GM12878 (cell line): ENCODE measurements at regions of chr4 and their contacts with region 1.

Region 1: GRCh38 chr4:78638337-78639172 is 87.0 kb downstream of the ANXA3 start:
- DNase-seq: peak; percentile 86
- ATAC-seq: peak; percentile 78
- H3K4me3 ChIP-seq: no peak overlapping the region; the same call in 1 of the 2 replicates
- H3K27ac ChIP-seq: peak overlapping the region; percentile 62
- H3K4me1 ChIP-seq: peaks cover 57% of the 10 kb centered on the region
- H3K27me3 ChIP-seq: no peaks in the 10 kb centered on the region
- CTCF ChIP-seq: no peak
- EP300 ChIP-seq: peak; percentile 79; a peak in 3 of 4 replicates
- POLR2A ChIP-seq: no peak
- RAD21 ChIP-seq: no peak

Region 2: GRCh38 chr4:76781698-76782595 is 1856.6 kb before region 1 on chr4:
- CTCF ChIA-PET with region 1: no interaction called
- POLR2A ChIA-PET with region 1: no interaction called
- RAD21 ChIA-PET with region 1: no interaction called
- SMC1A ChIA-PET with region 1: no interaction called
- in situ Hi-C with region 1: no loop called
- intact Hi-C with region 1: no loop called
- DNase-seq: peak; percentile 76
- ATAC-seq: peak; percentile 66
- H3K4me3 ChIP-seq: no peak overlapping the region
- H3K27ac ChIP-seq: peak overlapping the region; percentile 76
- H3K4me1 ChIP-seq: peaks cover 16% of the 10 kb centered on the region
- H3K27me3 ChIP-seq: no peaks in the 10 kb centered on the region; a peak in 1 of 4 replicates
- CTCF ChIP-seq: no peak
- EP300 ChIP-seq: no peak
- POLR2A ChIP-seq: no peak
- RAD21 ChIP-seq: no peak

Region 3: GRCh38 chr4:78288327-78288726 is 350.2 kb before region 1 on chr4:
- CTCF ChIA-PET with region 1: no interaction called
- POLR2A ChIA-PET with region 1: no interaction called
- RAD21 ChIA-PET with region 1: no interaction called
- SMC1A ChIA-PET with region 1: no interaction called
- in situ Hi-C with region 1: no loop called
- intact Hi-C with region 1: no loop called
- DNase-seq: no peak
- ATAC-seq: no peak
- H3K4me3 ChIP-seq: no peak overlapping the region
- H3K27ac ChIP-seq: no peak overlapping the region
- H3K4me1 ChIP-seq: no peaks in the 10 kb centered on the region
- H3K27me3 ChIP-seq: no peaks in the 10 kb centered on the region
- CTCF ChIP-seq: no peak
- EP300 ChIP-seq: no peak
- POLR2A ChIP-seq: no peak
- RAD21 ChIP-seq: no peak

Region 4: GRCh38 chr4:78584863-78585547 is 53.5 kb before region 1 on chr4:
- CTCF ChIA-PET with region 1: no interaction called
- POLR2A ChIA-PET with region 1: no interaction called
- RAD21 ChIA-PET with region 1: no interaction called
- SMC1A ChIA-PET with region 1: no interaction called
- in situ Hi-C with region 1: no loop called
- intact Hi-C with region 1: no loop called
- DNase-seq: no peak
- ATAC-seq: no peak
- H3K4me3 ChIP-seq: no peak overlapping the region
- H3K27ac ChIP-seq: no peak overlapping the region
- H3K4me1 ChIP-seq: no peaks in the 10 kb centered on the region
- H3K27me3 ChIP-seq: no peaks in the 10 kb centered on the region
- CTCF ChIP-seq: no peak
- EP300 ChIP-seq: no peak
- POLR2A ChIP-seq: no peak
- RAD21 ChIP-seq: no peak

Region 5: DNA sequence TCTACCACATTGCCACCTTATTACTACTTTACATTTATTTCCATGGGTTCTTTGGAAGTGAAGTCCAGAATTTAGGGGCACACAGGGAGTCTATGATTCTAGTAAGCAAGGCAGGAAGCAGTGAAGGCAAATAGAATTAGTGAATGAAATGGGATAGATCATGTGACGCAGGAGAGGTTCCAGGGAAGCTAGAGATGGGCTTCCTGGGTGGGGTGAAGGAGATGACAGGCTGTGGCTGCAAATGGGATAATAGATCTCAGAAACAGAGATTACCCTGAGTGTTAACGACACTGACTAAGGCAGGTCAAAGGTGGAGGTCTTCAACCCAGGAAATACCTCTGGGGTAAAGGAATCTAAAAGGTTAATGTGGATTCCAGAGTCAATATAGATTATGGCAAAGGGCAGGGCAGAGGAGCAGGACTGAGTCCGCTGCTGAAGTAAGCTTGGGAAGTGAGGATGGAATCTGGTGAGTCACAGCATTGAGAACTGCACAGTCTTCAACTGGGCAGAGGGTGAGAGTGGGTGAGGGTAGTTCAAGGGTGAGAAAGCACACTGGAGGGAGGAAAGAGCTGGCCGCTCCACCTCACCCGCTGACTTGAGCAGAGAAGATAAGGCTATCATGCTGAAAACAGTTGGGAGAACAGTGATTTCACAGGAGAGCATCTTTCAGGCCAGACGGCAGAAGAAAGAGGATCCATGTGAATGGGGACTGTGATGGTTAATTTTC is 16.1 kb before region 1 on chr4:
- CTCF ChIA-PET with region 1: interaction called, 25 read pairs
- POLR2A ChIA-PET with region 1: interaction called, 106 read pairs
- RAD21 ChIA-PET with region 1: interaction called, 265 read pairs
- SMC1A ChIA-PET with region 1: interaction called, 379 read pairs
- in situ Hi-C with region 1: no loop called
- intact Hi-C with region 1: no loop called
- DNase-seq: no peak
- ATAC-seq: no peak
- H3K4me3 ChIP-seq: no peak overlapping the region
- H3K27ac ChIP-seq: no peak overlapping the region
- H3K4me1 ChIP-seq: peaks cover 12% of the 10 kb centered on the region; the same call in 1 of the 2 replicates
- H3K27me3 ChIP-seq: no peaks in the 10 kb centered on the region
- CTCF ChIP-seq: no peak
- EP300 ChIP-seq: no peak
- POLR2A ChIP-seq: no peak
- RAD21 ChIP-seq: no peak